ENCODE measurements at regions of chr9 and their contacts with region 1.

Region 1: GRCh38 chr9:90142580-90142979 is 500.0 kb downstream of the DIRAS2 start:
- DNase-seq: peak; percentile 24
- H3K4me3 ChIP-seq: no peak overlapping the region; a peak in 1 of 4 replicates
- H3K27ac ChIP-seq: no peak overlapping the region
- H3K4me1 ChIP-seq: no peaks in the 10 kb centered on the region; a peak in 1 of 4 replicates
- H3K27me3 ChIP-seq: no peaks in the 10 kb centered on the region
- CTCF ChIP-seq: peak; percentile 54
- EP300 ChIP-seq: no peak
- RAD21 ChIP-seq: peak; percentile 61

Region 2: DNA sequence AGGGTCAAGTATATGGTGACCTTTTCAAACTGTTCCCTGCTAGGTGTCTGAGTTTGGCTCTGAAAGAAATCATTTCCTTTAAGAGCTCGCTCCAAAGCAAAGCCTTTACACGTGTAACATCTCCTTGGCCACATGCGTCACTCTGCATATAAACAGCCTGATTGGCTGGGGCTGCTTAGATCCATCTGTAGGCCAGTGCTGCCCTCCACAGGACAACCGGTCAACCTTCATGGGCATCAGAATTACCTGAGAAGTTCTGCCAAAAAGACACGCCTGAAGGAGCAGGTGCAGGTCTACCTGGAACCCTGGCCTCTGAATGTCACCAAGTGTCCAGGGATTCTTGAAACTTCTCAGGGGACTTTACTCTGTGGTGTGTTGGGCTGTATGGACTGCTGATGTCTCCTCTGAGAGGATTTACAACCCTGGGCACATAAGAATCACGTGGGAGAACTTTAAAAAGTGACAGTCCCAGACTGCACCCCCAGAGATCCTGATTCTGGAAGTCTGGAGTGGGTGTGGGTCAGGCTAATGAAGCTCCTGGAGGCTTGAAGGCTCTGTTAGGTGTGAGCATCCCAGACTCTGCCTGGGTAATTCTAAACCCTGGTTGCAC is 40.2 kb before region 1 on chr9:
- CTCF ChIA-PET with region 1: interaction called, 10 read pairs
- POLR2A ChIA-PET with region 1: no interaction called
- DNase-seq: peak; percentile 84
- H3K4me3 ChIP-seq: no peak overlapping the region; a peak in 1 of 4 replicates
- H3K27ac ChIP-seq: no peak overlapping the region
- H3K4me1 ChIP-seq: peaks cover 0 to 9% of the 10 kb centered on the region in 2 experiments; a peak in 1 of 4 replicates
- H3K27me3 ChIP-seq: no peaks in the 10 kb centered on the region
- CTCF ChIP-seq: peak; percentile 65
- EP300 ChIP-seq: no peak
- RAD21 ChIP-seq: peak; percentile 94

Region 3: GRCh38 chr9:90165281-90165680 is 22.7 kb after region 1 on chr9:
- CTCF ChIA-PET with region 1: interaction called, 12 read pairs
- POLR2A ChIA-PET with region 1: no interaction called
- DNase-seq: no peak
- H3K4me3 ChIP-seq: no peak overlapping the region
- H3K27ac ChIP-seq: no peak overlapping the region
- H3K4me1 ChIP-seq: peaks cover 0 to 3% of the 10 kb centered on the region in 2 experiments; a peak in 1 of 4 replicates
- H3K27me3 ChIP-seq: no peaks in the 10 kb centered on the region
- CTCF ChIP-seq: no peak
- EP300 ChIP-seq: no peak
- RAD21 ChIP-seq: no peak

Region 4: DNA sequence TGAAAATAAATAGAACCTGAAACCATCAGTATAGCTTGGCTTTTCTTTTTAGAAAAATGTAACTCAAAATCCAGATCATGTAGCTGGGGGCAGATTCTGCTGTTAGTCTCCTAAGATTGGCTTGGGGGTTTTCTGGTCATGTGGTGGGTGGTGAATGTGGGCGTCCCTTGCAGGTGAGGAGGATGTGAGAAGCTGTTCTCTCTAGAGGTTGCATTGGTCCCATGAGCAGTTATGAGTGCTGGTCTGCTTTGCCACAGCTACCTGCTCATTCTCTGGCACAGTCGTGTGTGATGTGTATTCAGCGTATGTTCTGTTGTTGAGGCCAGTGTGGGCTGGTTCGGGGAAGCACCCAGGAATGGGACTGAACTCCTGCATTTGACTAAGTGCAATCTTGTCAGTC is 33.3 kb after region 1 on chr9:
- CTCF ChIA-PET with region 1: interaction called, 10 read pairs
- POLR2A ChIA-PET with region 1: no interaction called
- DNase-seq: no peak
- H3K4me3 ChIP-seq: no peak overlapping the region
- H3K27ac ChIP-seq: no peak overlapping the region
- H3K4me1 ChIP-seq: no peaks in the 10 kb centered on the region; a peak in 1 of 4 replicates
- H3K27me3 ChIP-seq: no peaks in the 10 kb centered on the region
- CTCF ChIP-seq: no peak
- EP300 ChIP-seq: no peak
- RAD21 ChIP-seq: no peak

Region 5: GRCh38 chr9:90870621-90871326 is 728.2 kb after region 1 on chr9:
- CTCF ChIA-PET with region 1: interaction called, 51 read pairs
- POLR2A ChIA-PET with region 1: no interaction called
- DNase-seq: peak; percentile 50
- H3K4me3 ChIP-seq: peak overlapping the region in 1 of 2 experiments; percentile 35; a peak in 1 of 4 replicates
- H3K27ac ChIP-seq: no peak overlapping the region
- H3K4me1 ChIP-seq: no peaks in the 10 kb centered on the region; a peak in 1 of 4 replicates
- H3K27me3 ChIP-seq: no peaks in the 10 kb centered on the region
- CTCF ChIP-seq: peak; percentile 95
- EP300 ChIP-seq: no peak
- RAD21 ChIP-seq: peak; percentile 91